ENCODE measurements at regions of chr5 and their contacts with region 1.

Region 1: GRCh38 chr5:36944607-36945225 is 68.1 kb downstream of the NIPBL start:
- DNase-seq: no peak
- ATAC-seq: no peak
- H3K4me3 Mint-ChIP-seq: no peak overlapping the region
- H3K27ac Mint-ChIP-seq: no peak overlapping the region
- H3K4me1 Mint-ChIP-seq: peaks cover 44% of the 10 kb centered on the region
- H3K27me3 Mint-ChIP-seq: no peaks in the 10 kb centered on the region
- CTCF ChIP-seq: no peak

Region 2: DNA sequence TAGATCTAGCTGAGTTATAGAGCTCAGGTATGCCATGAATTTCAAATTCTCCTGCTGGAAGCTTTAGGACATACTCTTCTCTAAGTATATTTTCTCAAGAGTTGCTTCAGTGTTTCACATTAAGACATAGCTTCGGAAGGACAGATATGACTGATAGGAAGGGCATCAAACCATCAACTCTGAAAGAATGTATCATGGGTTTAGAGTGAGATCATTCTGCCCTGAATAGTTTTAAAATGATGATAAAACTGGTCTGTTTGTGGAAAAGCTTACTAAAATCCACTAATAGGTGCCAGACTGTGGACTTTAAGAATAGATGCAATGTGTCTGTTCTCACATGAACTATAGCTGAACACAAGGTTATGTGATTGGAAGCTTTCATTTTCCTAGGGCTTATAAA is 1318.6 kb before region 1 on chr5:
- CTCF ChIA-PET with region 1: no interaction called
- POLR2A ChIA-PET with region 1: no interaction called
- intact Hi-C with region 1: no loop called
- DNase-seq: no peak
- ATAC-seq: no peak
- H3K4me3 Mint-ChIP-seq: no peak overlapping the region
- H3K27ac Mint-ChIP-seq: no peak overlapping the region
- H3K4me1 Mint-ChIP-seq: no peaks in the 10 kb centered on the region
- H3K27me3 Mint-ChIP-seq: no peaks in the 10 kb centered on the region
- CTCF ChIP-seq: no peak

Region 3: GRCh38 chr5:36397901-36398536 is 546.7 kb before region 1 on chr5:
- CTCF ChIA-PET with region 1: no interaction called
- POLR2A ChIA-PET with region 1: no interaction called
- intact Hi-C with region 1: loop called (anchors 10 kb)
- DNase-seq: no peak
- ATAC-seq: no peak
- H3K4me3 Mint-ChIP-seq: no peak overlapping the region
- H3K27ac Mint-ChIP-seq: no peak overlapping the region
- H3K4me1 Mint-ChIP-seq: peaks cover 26% of the 10 kb centered on the region
- H3K27me3 Mint-ChIP-seq: no peaks in the 10 kb centered on the region
- CTCF ChIP-seq: no peak

Region 4: DNA sequence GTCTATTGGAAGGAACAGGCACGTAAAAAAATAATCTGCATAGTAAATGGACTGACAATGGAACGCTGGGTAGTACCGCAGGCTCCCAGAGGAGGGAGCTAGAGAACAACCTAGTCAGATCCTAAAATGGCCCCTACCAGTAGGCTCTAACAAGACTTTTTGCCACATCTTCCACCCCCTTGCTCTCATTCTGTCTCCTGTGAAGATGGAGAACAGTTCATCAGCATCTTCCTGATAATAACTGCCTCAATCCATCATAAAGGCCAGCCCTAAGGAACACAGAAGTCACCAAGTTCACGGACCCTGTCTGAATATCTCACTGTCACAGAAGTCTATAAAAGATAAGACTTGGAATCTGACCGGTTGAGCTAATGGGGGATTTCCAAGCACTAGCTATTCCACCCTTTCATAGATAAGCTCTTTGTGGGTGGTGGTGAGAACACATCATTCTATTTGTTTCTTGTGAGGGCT is 204.9 kb before region 1 on chr5:
- CTCF ChIA-PET with region 1: interaction called, 3 read pairs
- POLR2A ChIA-PET with region 1: no interaction called
- intact Hi-C with region 1: loop called (anchors 1 kb)
- DNase-seq: peak; percentile 47
- ATAC-seq: peak; percentile 75
- H3K4me3 Mint-ChIP-seq: no peak overlapping the region
- H3K27ac Mint-ChIP-seq: no peak overlapping the region
- H3K4me1 Mint-ChIP-seq: peaks cover 11% of the 10 kb centered on the region
- H3K27me3 Mint-ChIP-seq: peaks cover 25% of the 10 kb centered on the region
- CTCF ChIP-seq: no peak

Region 5: GRCh38 chr5:36744773-36745589 is 199.7 kb before region 1 on chr5:
- CTCF ChIA-PET with region 1: interaction called, 3 read pairs
- POLR2A ChIA-PET with region 1: no interaction called
- intact Hi-C with region 1: loop called (anchors 2 kb)
- DNase-seq: peak; percentile 48
- ATAC-seq: peak; percentile 74
- H3K4me3 Mint-ChIP-seq: peak overlapping the region; percentile 89
- H3K27ac Mint-ChIP-seq: peak overlapping the region; percentile 22
- H3K4me1 Mint-ChIP-seq: peaks cover 21% of the 10 kb centered on the region
- H3K27me3 Mint-ChIP-seq: peaks cover 10% of the 10 kb centered on the region
- CTCF ChIP-seq: no peak

Region 6: GRCh38 chr5:36875790-36876388 is 68.8 kb before region 1 on chr5:
- CTCF ChIA-PET with region 1: interaction called, 4 read pairs
- POLR2A ChIA-PET with region 1: interaction called, 12 read pairs
- intact Hi-C with region 1: loop called (anchors 1 kb)
- DNase-seq: peak; percentile 75
- ATAC-seq: peak; percentile 69
- H3K4me3 Mint-ChIP-seq: peak overlapping the region; percentile 93
- H3K27ac Mint-ChIP-seq: peak overlapping the region; percentile 93
- H3K4me1 Mint-ChIP-seq: peaks cover 46% of the 10 kb centered on the region
- H3K27me3 Mint-ChIP-seq: no peaks in the 10 kb centered on the region
- CTCF ChIP-seq: no peak

Region 7: GRCh38 chr5:36928947-36929346 is 15.8 kb before region 1 on chr5:
- CTCF ChIA-PET with region 1: interaction called, 4 read pairs
- POLR2A ChIA-PET with region 1: no interaction called
- intact Hi-C with region 1: loop called (anchors 2 kb)
- DNase-seq: no peak
- ATAC-seq: no peak
- H3K4me3 Mint-ChIP-seq: peak overlapping the region; percentile 36
- H3K27ac Mint-ChIP-seq: no peak overlapping the region
- H3K4me1 Mint-ChIP-seq: peaks cover 64% of the 10 kb centered on the region
- H3K27me3 Mint-ChIP-seq: no peaks in the 10 kb centered on the region
- CTCF ChIP-seq: no peak

Region 8: GRCh38 chr5:36957953-36958559 is 13.3 kb after region 1 on chr5:
- CTCF ChIA-PET with region 1: interaction called, 3 read pairs
- POLR2A ChIA-PET with region 1: interaction called, 3 read pairs
- intact Hi-C with region 1: loop called (anchors 2 kb)
- DNase-seq: no peak
- ATAC-seq: no peak
- H3K4me3 Mint-ChIP-seq: no peak overlapping the region
- H3K27ac Mint-ChIP-seq: no peak overlapping the region
- H3K4me1 Mint-ChIP-seq: peaks cover 12% of the 10 kb centered on the region
- H3K27me3 Mint-ChIP-seq: no peaks in the 10 kb centered on the region
- CTCF ChIP-seq: no peak

Region 9: GRCh38 chr5:37255774-37256358 is 311.1 kb after region 1 on chr5:
- CTCF ChIA-PET with region 1: no interaction called
- POLR2A ChIA-PET with region 1: no interaction called
- intact Hi-C with region 1: no loop called
- DNase-seq: no peak
- ATAC-seq: no peak
- H3K4me3 Mint-ChIP-seq: no peak overlapping the region
- H3K27ac Mint-ChIP-seq: no peak overlapping the region
- H3K4me1 Mint-ChIP-seq: no peaks in the 10 kb centered on the region
- H3K27me3 Mint-ChIP-seq: no peaks in the 10 kb centered on the region
- CTCF ChIP-seq: no peak